H1 (cell line): ENCODE measurements at regions of chr20 and their contacts with region 1.

Region 1: DNA sequence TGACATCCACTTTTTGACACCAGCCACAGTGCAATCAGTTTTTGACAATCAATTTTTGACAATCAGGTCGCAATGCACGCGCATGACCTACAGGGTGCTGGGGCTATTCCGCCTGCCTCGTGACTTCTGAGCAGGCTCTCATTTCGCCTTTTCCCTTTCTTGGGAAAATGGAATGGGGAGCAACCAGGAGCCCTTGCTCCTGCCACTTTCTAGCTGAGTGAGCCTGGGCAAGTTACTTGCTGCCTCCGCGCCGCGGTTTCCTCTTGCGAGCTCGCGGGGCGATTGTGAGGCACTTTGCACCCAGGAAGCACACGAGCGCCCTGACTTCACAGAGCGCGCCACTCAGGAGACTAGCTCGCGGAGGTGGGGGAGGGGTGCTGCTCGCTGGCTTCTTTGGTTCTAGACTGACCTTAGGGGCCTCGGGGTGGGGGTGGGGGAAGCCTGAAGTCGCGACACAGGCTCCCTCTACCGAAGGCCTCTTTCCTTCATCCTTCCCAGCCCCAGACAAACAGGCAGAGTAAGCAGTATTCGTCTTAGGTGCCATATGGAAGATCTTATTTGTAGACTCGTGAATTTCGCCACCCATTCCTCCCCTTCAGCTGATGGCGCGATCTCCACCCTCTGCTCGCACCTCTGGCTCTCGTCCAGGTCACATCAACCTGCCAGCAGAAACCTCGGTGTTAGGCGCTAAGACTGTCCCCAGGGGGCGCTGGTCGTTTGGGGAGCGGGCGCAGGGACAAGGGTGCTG is 4.6 kb downstream of the TP53TG5 start:
- DNase-seq: peak; percentile 70 to 96
- H3K4me3 ChIP-seq: peak overlapping the region; percentile 27 to 63 (median 45); a peak in 7 of 8 replicates
- H3K27ac ChIP-seq: no peak overlapping the region
- H3K4me1 ChIP-seq: peaks cover 0 to 16% (median 9%) of the 10 kb centered on the region in 4 experiments; a peak in 6 of 7 replicates
- H3K27me3 ChIP-seq: peaks cover 0 to 12% (median 9%) of the 10 kb centered on the region in 4 experiments; a peak in 3 of 7 replicates
- CTCF ChIP-seq: peak; percentile 88 to 96 (median 92)
- EP300 ChIP-seq: no peak
- POLR2A ChIP-seq: no peak
- RAD21 ChIP-seq: peak; percentile 77 to 85

Region 2: GRCh38 chr20:45311589-45312211 is 61.8 kb before region 1 on chr20:
- CTCF ChIA-PET with region 1: interaction called, 156 read pairs
- POLR2A ChIA-PET with region 1: no interaction called
- DNase-seq: peak in 1 of 2 experiments; percentile 93
- H3K4me3 ChIP-seq: peak overlapping the region; percentile 24 to 55 (median 48); a peak in 7 of 8 replicates
- H3K27ac ChIP-seq: no peak overlapping the region
- H3K4me1 ChIP-seq: peaks cover 0 to 11% (median 7%) of the 10 kb centered on the region in 4 experiments; a peak in 5 of 7 replicates
- H3K27me3 ChIP-seq: peaks cover 0 to 15% (median 5%) of the 10 kb centered on the region in 4 experiments; a peak in 5 of 7 replicates
- CTCF ChIP-seq: peak; percentile 87 to 96 (median 95)
- EP300 ChIP-seq: no peak
- POLR2A ChIP-seq: no peak
- RAD21 ChIP-seq: peak; percentile 69 to 73

Region 3: DNA sequence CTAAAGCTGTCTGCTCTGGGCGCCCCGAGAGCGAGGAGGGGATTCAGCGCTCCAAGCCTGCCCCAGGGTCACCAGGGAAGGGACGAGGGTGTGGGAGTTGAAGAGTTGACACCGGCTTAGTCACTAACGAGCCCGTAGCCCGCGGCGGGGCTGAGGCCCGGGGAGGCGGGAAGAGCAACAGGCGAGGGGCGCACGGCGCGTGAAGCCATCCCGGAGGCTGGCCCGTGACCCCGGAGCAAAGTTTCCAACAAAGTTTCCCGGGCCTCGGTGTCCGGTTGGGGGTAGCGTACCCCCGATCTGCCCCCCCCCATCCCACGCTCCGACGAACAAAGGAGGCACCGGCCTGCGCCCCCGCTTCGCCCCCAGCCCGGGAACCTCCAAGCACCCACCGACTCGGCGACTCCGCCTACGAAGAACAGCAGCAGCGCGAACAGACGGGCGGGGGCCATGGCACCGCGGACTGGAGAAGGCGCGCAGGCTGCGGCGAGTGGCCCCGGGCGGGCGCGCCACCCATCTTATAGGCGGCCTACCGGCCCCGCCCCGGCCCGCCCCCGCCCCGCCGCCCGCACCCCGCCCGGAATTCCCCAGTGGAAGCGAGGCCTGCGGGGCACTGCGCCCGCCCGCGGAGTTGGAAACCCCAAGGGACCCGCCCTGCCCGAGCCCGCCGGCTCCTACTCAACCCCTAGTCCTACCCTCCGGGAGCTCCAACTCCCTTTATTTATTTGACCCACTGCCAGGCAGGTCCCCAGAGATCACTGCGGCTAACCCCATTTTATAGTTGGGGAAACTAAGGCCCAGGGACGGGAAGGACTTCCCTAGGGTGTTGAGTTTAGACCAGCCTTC is 25.4 kb before region 1 on chr20 and contains the start of gene SDC4:
- CTCF ChIA-PET with region 1: interaction called, 17 read pairs
- POLR2A ChIA-PET with region 1: interaction called, 7 read pairs
- DNase-seq: peak in 1 of 2 experiments; percentile 63
- H3K4me3 ChIP-seq: peak within 1 kb of the TSS; percentile 68 to 95 (median 72)
- H3K27ac ChIP-seq: peak within 1 kb of the TSS; percentile 10; the same call in 1 of the 2 replicates
- H3K4me1 ChIP-seq: peaks cover 26 to 45% (median 35%) of the 10 kb centered on the region in 4 experiments
- H3K27me3 ChIP-seq: no peaks in the 10 kb centered on the region
- CTCF ChIP-seq: no peak
- EP300 ChIP-seq: no peak
- POLR2A ChIP-seq: peak; percentile 96
- RAD21 ChIP-seq: no peak
- total RNA-seq, gene SDC4: 59.2 and 60.2 TPM in 2 replicates

Region 4: DNA sequence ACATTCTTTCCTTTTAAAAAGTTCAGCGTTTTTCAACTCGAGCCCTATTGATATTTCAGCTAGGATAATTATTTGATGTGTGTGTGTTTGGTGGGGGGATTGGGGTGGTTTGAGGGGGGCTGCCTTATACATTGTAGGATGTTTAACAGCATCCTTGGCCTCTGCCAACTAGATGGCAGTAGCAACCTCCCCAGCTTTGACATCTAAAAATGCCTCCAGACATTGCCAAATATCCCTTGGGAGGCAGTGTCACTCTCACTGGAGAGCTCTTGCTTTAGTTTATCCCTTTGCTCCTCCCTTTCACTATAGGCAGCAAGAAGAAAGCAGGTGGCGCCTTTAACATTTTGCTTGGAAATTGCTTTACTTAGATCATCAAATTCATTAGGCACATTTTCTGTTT is 19.2 kb after region 1 on chr20:
- CTCF ChIA-PET with region 1: interaction called, 25 read pairs
- POLR2A ChIA-PET with region 1: interaction called, 4 read pairs
- DNase-seq: no peak
- H3K4me3 ChIP-seq: no peak overlapping the region
- H3K27ac ChIP-seq: no peak overlapping the region
- H3K4me1 ChIP-seq: no peaks in the 10 kb centered on the region
- H3K27me3 ChIP-seq: no peaks in the 10 kb centered on the region
- CTCF ChIP-seq: peak in 2 of 3 experiments; percentile 25 to 28; a peak in 2 of 4 replicates
- EP300 ChIP-seq: no peak
- POLR2A ChIP-seq: no peak
- RAD21 ChIP-seq: peak; percentile 28 to 44; a peak in 3 of 4 replicates

Region 5: DNA sequence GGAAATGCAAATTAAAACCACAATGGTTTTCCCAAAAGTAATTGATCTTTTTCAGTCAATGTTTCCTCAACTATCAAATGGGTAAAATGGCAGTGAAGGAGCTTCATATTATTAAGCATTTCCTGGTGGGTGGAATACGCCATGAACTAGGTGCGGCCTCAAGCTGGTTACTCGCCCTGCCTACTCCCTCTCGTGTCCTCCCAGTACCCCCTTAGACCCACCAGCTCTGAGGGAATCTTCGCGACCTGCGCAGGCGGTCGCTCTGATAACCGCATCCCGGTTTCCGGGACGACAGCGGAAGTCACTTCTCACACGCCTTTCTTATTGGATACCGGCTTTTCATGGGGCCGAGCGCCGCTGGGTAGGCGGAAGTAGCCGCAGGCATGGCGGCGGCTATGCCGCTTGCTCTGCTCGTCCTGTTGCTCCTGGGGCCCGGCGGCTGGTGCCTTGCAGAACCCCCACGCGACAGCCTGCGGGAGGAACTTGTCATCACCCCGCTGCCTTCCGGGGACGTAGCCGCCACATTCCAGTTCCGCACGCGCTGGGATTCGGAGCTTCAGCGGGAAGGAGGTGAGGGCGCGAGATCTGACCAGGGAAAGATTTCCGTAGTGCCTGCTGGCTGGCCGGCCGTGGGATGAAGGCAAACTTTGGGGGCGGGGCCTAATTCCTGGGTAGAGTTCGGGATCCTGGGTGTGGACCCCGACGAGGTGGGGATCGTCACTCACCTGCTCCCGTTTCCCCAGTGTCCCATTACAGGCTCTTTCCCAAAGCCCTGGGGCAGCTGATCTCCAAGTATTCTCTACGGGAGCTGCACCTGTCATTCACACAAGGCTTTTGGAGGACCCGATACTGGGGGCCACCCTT is 42.5 kb after region 1 on chr20 and contains the start of gene PIGT:
- CTCF ChIA-PET with region 1: interaction called, 127 read pairs
- POLR2A ChIA-PET with region 1: interaction called, 7 read pairs
- DNase-seq: peak; percentile 54 to 84
- H3K4me3 ChIP-seq: peak within 1 kb of the TSS; percentile 74 to 89 (median 82)
- H3K27ac ChIP-seq: peak within 1 kb of the TSS; percentile 49
- H3K4me1 ChIP-seq: peaks cover 0 to 5% (median 2%) of the 10 kb centered on the region in 4 experiments; a peak in 3 of 7 replicates
- H3K27me3 ChIP-seq: no peaks in the 10 kb centered on the region
- CTCF ChIP-seq: no peak
- EP300 ChIP-seq: no peak
- POLR2A ChIP-seq: peak; percentile 80 to 87
- RAD21 ChIP-seq: peak; percentile 2 to 13; a peak in 1 of 4 replicates
- total RNA-seq, gene PIGT: 64.3 and 66.0 TPM in 2 replicates

Region 6: DNA sequence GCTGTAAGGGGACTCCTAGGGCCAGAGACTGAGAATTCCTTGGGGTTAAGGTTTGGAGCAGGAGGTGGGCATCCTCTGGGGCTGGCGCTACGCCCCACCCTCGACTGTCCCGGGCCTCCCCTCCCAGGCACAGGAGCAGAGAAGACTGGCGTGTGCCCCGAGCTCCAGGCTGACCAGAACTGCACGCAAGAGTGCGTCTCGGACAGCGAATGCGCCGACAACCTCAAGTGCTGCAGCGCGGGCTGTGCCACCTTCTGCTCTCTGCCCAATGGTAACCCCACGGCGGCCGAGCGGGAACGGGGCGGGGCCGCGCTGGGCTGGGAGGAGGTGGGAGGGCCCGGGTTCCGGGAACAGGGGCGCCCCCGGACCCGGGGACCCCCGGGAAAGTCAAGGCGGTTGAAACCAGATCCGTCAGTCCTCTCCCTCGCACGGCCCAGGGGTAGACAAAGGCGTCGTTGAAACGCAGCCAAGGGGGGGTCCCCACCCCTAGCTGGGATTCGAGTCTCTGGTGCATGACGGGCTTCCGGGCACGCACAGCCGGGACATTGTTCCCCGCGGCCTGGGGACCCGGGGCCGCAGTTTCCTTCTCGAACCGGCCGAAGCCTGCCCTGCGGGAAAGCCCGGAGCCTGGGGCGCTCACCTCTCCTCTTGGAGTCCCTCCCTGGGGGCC is 96.9 kb after region 1 on chr20:
- CTCF ChIA-PET with region 1: interaction called, 21 read pairs
- POLR2A ChIA-PET with region 1: no interaction called
- DNase-seq: peak in 1 of 2 experiments; percentile 87
- H3K4me3 ChIP-seq: peak overlapping the region; percentile 63 to 77 (median 70)
- H3K27ac ChIP-seq: peak overlapping the region; percentile 36; the same call in 1 of the 2 replicates
- H3K4me1 ChIP-seq: peaks cover 2 to 20% (median 7%) of the 10 kb centered on the region in 4 experiments
- H3K27me3 ChIP-seq: peaks cover 0 to 4% (median 1%) of the 10 kb centered on the region in 4 experiments; a peak in 3 of 7 replicates
- CTCF ChIP-seq: no peak
- EP300 ChIP-seq: no peak
- POLR2A ChIP-seq: peak in 1 of 2 experiments; percentile 67; a peak in 1 of 3 replicates
- RAD21 ChIP-seq: no peak

Region 7: DNA sequence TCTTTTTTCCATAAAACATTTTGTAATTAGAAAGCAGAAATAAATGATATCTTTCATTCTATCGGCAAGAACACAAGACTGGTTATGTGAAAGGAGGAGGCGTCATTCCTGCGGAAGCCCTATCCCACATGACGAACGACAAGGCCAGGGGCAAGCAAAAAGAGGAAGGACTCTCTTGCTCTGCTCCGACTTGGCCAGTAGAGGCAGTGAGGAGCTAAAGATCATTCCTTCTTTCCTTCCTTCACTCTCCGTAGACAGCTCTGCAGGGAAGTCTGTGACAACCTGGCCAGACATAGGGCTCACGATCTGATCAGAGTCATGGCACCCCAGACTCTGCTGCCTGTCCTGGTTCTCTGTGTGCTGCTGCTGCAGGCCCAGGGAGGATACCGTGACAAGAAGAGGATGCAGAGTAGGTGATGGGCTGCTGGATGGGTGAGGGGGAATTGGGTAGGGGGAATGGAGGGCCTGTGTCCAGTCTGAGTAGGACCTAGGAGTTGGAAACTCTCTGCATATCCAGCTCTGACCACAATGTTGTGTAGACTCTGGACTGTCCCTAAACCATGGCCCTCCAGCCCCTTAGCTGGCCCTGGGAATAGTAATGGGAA is 256.1 kb after region 1 on chr20 and contains the start of gene WFDC10A:
- CTCF ChIA-PET with region 1: no interaction called
- POLR2A ChIA-PET with region 1: no interaction called
- DNase-seq: peak; percentile 33 to 65
- H3K4me3 ChIP-seq: no peak within 1 kb of the TSS
- H3K27ac ChIP-seq: no peak within 1 kb of the TSS
- H3K4me1 ChIP-seq: peaks cover 0 to 2% (median 0%) of the 10 kb centered on the region in 4 experiments; a peak in 2 of 7 replicates
- H3K27me3 ChIP-seq: 0 out of 7 replicates have a peak, but pooled peaks cover 0 to 2% (median 0%) of the 10 kb centered on the region in 4 experiments
- CTCF ChIP-seq: peak; percentile 67 to 95 (median 69)
- EP300 ChIP-seq: no peak
- POLR2A ChIP-seq: no peak
- RAD21 ChIP-seq: peak; percentile 68 to 77
- total RNA-seq, gene WFDC10A: not detected in 2 replicates